ENCODE measurements at regions of chr1 and their contacts with region 1.

Region 1: GRCh38 chr1:209565759-209566678 is 17.5 kb upstream of the CAMK1G start:
- DNase-seq: peak; percentile 88
- ATAC-seq: peak; percentile 89
- H3K4me3 Mint-ChIP-seq: no peak overlapping the region
- H3K27ac Mint-ChIP-seq: no peak overlapping the region
- H3K4me1 Mint-ChIP-seq: peaks cover 21% of the 10 kb centered on the region
- H3K27me3 Mint-ChIP-seq: peaks cover 9% of the 10 kb centered on the region

Region 2: DNA sequence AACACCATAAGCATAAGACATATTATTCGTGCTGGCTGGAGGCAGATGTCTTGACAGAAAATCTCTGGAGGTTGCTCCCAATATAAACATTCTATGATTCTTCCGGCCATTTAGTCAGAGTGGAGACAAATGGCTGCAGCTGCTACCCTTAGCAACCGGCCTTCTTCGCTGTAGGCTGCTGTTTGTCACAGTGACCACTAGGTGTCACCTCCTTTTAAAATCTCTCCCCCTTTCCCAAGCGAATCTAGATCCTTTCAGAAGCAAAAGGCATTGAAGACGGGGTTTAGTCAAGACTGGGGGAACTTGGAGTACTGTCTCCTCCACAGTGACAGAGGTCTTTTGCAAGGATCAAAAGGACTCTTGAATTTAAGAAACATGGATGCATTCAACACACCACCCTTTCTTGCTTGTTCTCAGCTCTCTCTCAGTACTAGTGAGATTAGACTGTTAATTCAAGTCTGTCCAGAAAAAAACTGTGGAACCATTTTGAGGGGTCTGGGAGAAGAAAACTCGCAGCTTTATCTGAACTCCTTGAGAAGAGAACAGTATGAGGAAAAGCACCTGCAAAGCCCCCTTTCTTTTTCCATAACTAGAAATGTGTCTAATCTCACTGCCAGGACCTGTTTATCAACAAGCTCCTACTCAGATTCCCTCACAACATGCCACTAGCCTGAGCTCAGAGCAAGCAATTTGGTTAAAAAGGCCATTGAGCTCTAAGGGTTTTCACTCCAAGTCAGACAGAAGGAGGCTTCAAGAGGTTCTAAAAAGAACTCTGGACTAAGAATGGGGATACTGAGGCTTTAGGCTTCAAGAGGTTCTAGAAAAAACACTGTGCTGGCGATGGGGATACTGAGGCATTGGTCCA is 913.5 kb before region 1 on chr1:
- CTCF ChIA-PET with region 1: no interaction called
- POLR2A ChIA-PET with region 1: no interaction called
- intact Hi-C with region 1: loop called in 1 of 2 experiments (anchors 2 kb)
- DNase-seq: peak; percentile 49
- ATAC-seq: no peak
- H3K4me3 Mint-ChIP-seq: no peak overlapping the region
- H3K27ac Mint-ChIP-seq: no peak overlapping the region
- H3K4me1 Mint-ChIP-seq: no peaks in the 10 kb centered on the region
- H3K27me3 Mint-ChIP-seq: peaks cover 31% of the 10 kb centered on the region

Region 3: GRCh38 chr1:209576798-209577197 is 10.8 kb after region 1 on chr1:
- CTCF ChIA-PET with region 1: interaction called, 34 read pairs
- POLR2A ChIA-PET with region 1: no interaction called
- intact Hi-C with region 1: no loop called
- DNase-seq: peak; percentile 84
- ATAC-seq: peak; percentile 98
- H3K4me3 Mint-ChIP-seq: no peak overlapping the region
- H3K27ac Mint-ChIP-seq: no peak overlapping the region
- H3K4me1 Mint-ChIP-seq: no peaks in the 10 kb centered on the region
- H3K27me3 Mint-ChIP-seq: peaks cover 7% of the 10 kb centered on the region

Region 4: GRCh38 chr1:209583408-209583807 is 17.4 kb after region 1 on chr1 and contains the start of gene CAMK1G:
- CTCF ChIA-PET with region 1: interaction called, 17 read pairs
- POLR2A ChIA-PET with region 1: no interaction called
- intact Hi-C with region 1: no loop called
- DNase-seq: no peak
- ATAC-seq: no peak
- H3K4me3 Mint-ChIP-seq: no peak within 1 kb of the TSS
- H3K27ac Mint-ChIP-seq: no peak within 1 kb of the TSS
- H3K4me1 Mint-ChIP-seq: no peaks in the 10 kb centered on the region
- H3K27me3 Mint-ChIP-seq: peaks cover 15% of the 10 kb centered on the region
- total RNA-seq, gene CAMK1G: 0.09 to 0.23 TPM

Region 5: GRCh38 chr1:209607102-209607794 is 41.2 kb after region 1 on chr1:
- CTCF ChIA-PET with region 1: interaction called, 10 read pairs
- POLR2A ChIA-PET with region 1: no interaction called
- intact Hi-C with region 1: no loop called
- DNase-seq: peak; percentile 70
- ATAC-seq: peak; percentile 98
- H3K4me3 Mint-ChIP-seq: no peak overlapping the region
- H3K27ac Mint-ChIP-seq: no peak overlapping the region
- H3K4me1 Mint-ChIP-seq: peaks cover 3% of the 10 kb centered on the region
- H3K27me3 Mint-ChIP-seq: no peaks in the 10 kb centered on the region

Region 6: DNA sequence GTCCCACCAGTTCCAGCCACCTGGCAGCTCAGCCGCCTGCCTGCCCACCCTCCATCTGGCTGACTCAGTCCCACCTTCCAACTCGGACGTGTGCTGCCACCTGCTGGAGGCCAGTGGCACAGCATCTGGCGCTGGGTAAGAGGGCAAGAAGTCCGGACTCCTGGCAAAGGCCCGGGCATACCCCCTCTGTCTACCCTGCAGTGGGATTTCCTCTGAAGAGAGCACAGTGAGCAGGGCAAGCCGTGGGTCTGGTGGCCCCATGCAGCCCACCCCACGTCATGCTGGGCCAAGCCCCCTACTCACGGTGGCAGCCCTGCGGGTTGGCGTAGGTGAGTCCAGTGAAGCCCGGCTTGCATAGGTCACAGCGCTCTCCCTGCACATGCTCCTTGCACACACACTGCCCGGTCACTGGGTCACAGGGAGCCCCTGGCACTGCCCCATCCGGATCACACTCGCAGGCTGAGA is 61.7 kb after region 1 on chr1:
- CTCF ChIA-PET with region 1: interaction called, 16 read pairs
- POLR2A ChIA-PET with region 1: no interaction called
- intact Hi-C with region 1: loop called (anchors 1 kb)
- DNase-seq: peak; percentile 89
- ATAC-seq: peak; percentile 91
- H3K4me3 Mint-ChIP-seq: no peak overlapping the region
- H3K27ac Mint-ChIP-seq: no peak overlapping the region
- H3K4me1 Mint-ChIP-seq: peaks cover 8% of the 10 kb centered on the region
- H3K27me3 Mint-ChIP-seq: no peaks in the 10 kb centered on the region

Region 7: GRCh38 chr1:209911746-209912145 is 345.7 kb after region 1 on chr1:
- CTCF ChIA-PET with region 1: no interaction called
- POLR2A ChIA-PET with region 1: no interaction called
- intact Hi-C with region 1: no loop called
- DNase-seq: no peak
- ATAC-seq: no peak
- H3K4me3 Mint-ChIP-seq: no peak overlapping the region
- H3K27ac Mint-ChIP-seq: no peak overlapping the region
- H3K4me1 Mint-ChIP-seq: no peaks in the 10 kb centered on the region
- H3K27me3 Mint-ChIP-seq: no peaks in the 10 kb centered on the region

Measured in activated CD4-positive, alpha-beta T cell treated with anti-CD3 and anti-CD28 coated beads for 36 hours (primary cell).